AG04450 (cell line): ENCODE measurements at regions of chr12 and their contacts with region 1.

Region 1: DNA sequence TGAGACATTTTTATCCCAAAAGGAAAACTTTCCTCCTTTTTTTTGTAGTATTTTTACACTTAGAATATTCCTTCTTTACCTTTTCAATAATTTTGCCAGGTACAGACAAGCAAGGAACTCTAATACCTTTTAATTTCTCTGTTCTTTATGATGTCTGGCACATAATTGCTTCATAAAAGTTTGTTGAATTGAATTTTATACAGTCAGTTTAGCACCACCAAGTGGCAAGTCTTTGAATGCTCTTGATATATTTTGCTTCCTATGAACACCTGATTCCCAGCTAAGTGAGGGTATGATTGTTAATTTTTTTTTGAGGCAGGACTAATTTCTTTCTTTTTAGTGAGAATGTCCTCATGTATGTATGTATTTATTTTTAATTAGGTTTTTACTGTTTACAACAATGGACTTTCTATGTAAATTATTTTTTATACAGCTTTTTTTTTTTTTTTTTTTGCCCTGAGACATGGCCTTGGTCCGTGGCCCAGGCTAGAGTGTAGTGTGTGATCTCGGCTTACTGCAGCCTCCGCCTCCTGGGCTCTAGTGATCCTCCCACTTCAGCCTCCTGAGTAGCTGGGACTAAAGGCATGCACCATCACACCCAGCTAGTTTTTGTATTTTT is 6.9 kb downstream of the TBC1D15 start:
- DNase-seq: no peak
- H3K4me3 ChIP-seq: no peak overlapping the region
- H3K27ac ChIP-seq: no peak overlapping the region
- H3K27me3 ChIP-seq: no peaks in the 10 kb centered on the region
- CTCF ChIP-seq: peak; percentile 63

Region 2: GRCh38 chr12:71768900-71769299 is 77.5 kb before region 1 on chr12:
- CTCF ChIA-PET with region 1: interaction called, 3 read pairs
- POLR2A ChIA-PET with region 1: interaction called, 10 read pairs
- DNase-seq: no peak
- H3K4me3 ChIP-seq: no peak overlapping the region
- H3K27ac ChIP-seq: no peak overlapping the region
- H3K27me3 ChIP-seq: no peaks in the 10 kb centered on the region
- CTCF ChIP-seq: no peak

Region 3: GRCh38 chr12:71857657-71858056 is 11.2 kb after region 1 on chr12:
- CTCF ChIA-PET with region 1: interaction called, 26 read pairs
- POLR2A ChIA-PET with region 1: no interaction called
- DNase-seq: no peak
- H3K4me3 ChIP-seq: no peak overlapping the region
- H3K27ac ChIP-seq: no peak overlapping the region
- H3K27me3 ChIP-seq: no peaks in the 10 kb centered on the region
- CTCF ChIP-seq: no peak

Region 4: DNA sequence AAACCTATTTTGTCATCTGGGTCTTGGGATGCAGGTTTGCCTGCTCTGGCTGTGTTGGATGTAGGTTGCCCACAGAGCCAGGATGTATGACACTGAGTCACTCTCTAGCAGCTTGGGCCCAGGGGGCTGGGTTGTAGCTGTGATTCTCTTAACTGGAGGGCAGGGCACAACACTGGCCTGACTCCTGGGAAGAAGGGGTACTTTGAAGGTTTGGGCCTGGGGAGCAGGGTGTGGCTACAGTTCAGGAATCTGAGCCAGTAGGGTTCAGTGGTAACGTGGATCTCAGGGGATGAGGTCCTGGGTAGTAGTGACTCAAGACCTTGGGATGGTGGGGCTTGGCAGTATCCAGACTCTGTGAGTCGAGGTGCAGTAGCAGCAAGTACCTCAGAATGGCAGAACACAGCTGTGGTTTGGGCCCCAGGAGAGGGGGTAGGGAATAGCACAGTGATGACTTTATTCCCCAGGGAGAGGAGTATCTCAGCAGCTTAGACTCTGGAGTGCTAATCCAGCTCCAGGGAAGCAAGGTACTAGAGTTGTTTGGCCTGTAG is 18.8 kb after region 1 on chr12:
- CTCF ChIA-PET with region 1: interaction called, 28 read pairs
- POLR2A ChIA-PET with region 1: no interaction called
- DNase-seq: peak; percentile 70
- H3K4me3 ChIP-seq: no peak overlapping the region
- H3K27ac ChIP-seq: peak overlapping the region; percentile 89
- H3K27me3 ChIP-seq: no peaks in the 10 kb centered on the region
- CTCF ChIP-seq: no peak

Region 5: DNA sequence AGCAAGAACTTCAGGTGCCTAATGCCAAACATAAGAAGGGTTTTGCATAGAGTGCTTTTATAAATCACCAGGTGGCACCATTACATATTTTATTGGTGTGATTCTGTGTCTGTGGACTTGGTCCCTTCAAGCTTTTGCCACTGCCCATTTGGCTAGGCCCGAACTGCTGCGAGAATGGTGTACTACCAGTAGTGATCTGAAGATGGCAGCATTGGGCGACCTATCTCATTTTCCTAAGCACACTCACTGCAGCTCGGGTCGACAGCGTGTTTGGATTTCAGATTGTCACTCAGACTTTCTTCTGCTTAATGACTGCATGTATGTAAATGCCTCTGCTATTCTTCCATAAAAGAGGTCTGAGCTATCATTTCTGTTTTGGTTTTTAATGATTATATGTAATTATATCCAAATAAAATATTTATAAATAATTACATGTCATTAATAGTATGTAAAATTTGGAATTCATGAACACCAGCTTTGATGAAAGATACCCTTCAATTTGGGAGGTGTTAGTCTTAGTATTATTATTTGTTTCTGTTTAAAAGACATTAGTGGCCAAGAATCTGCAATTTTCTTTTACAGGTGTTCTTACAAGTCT is 170.7 kb after region 1 on chr12:
- CTCF ChIA-PET with region 1: no interaction called
- POLR2A ChIA-PET with region 1: interaction called, 11 read pairs
- DNase-seq: peak; percentile 47
- H3K4me3 ChIP-seq: no peak overlapping the region
- H3K27ac ChIP-seq: no peak overlapping the region
- H3K27me3 ChIP-seq: peaks cover 10% of the 10 kb centered on the region
- CTCF ChIP-seq: peak; percentile 83